ENCODE measurements at regions of chr18 and their contacts with region 1.

Region 1: GRCh38 chr18:35497370-35498197 is at the start of gene INO80C:
- DNase-seq: peak; percentile 94
- CTCF ChIP-seq: no peak

Region 2: DNA sequence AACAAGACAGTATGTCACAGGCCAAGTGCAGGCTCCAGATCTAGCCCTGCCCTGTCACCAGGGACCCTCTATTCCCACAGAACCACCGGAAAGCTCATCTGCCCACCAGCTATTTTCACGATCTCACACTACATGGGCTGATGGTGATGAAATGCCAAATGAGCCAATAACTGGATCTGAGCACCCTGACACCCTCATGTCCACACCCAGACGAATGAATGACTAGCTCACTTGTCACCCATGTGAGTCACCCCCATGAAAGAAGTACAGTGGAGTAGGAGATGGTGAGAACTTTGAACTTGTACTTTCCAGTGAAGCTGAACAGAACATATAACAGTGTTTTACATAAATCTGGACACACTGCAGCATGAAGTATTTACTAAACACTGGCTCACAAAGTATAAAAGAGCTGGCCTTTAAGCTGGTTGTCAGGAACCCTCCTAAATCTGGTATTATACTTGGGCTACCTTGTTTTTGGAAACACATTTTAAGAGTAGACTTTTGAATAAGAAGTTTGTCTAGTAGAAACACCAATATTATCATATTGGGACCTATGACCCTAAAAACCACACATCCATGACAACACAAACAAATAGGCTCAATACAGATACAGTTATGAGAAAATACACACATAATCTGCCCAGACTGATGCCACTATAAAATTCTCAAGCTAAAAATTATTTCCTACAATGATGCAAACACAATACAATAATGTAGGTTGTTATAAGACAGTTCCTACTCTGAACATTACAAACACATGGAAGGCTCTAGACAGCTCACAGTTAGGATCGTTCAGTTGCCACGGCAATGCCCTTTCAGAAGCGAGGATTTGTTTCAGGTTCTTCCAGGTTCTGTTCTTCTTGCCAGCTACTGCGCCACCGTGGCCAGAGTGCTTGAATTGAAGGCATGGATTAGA is 18.8 kb before region 1 on chr18:
- CTCF ChIA-PET with region 1: interaction called, 11 read pairs
- POLR2A ChIA-PET with region 1: interaction called, 7 read pairs
- DNase-seq: peak; percentile 35
- CTCF ChIP-seq: no peak

Region 3: GRCh38 chr18:35513181-35513936 is 15.8 kb after region 1 on chr18:
- CTCF ChIA-PET with region 1: interaction called, 16 read pairs
- POLR2A ChIA-PET with region 1: no interaction called
- DNase-seq: no peak
- CTCF ChIP-seq: no peak

Region 4: GRCh38 chr18:35602193-35602820 is 104.7 kb after region 1 on chr18:
- CTCF ChIA-PET with region 1: no interaction called
- POLR2A ChIA-PET with region 1: interaction called, 10 read pairs
- DNase-seq: no peak
- CTCF ChIP-seq: no peak

Region 5: GRCh38 chr18:35661483-35662146 is 164.0 kb after region 1 on chr18:
- CTCF ChIA-PET with region 1: no interaction called
- POLR2A ChIA-PET with region 1: no interaction called
- DNase-seq: peak; percentile 9
- CTCF ChIP-seq: no peak

Measured in GM10248 (cell line).